ENCODE measurements at regions of chr18 and their contacts with region 1.

Region 1: GRCh38 chr18:72762515-72763122 is 105.2 kb downstream of the NETO1 start:
- DNase-seq: no peak
- ATAC-seq: peak; percentile 27

Region 2: DNA sequence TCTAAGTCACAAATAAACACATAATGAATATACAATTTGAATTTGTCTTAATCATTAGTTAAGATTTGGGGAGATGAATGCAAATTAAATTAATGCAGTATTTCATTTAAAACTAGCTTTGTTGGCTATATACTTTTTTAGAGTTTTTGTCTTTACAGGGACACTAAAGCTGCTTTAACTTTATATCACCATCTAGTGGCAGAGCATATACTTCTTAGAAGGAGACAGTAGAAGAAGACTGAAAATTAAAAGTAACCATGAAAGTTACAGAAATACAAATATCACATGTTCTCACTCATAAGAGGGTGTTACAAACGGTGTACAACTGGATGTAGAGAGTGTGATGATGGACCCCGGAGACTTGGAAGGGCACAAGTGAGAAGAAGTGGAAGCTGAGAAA is 373.5 kb after region 1 on chr18:
- intact Hi-C with region 1: loop called (anchors 10 kb)
- DNase-seq: no peak
- ATAC-seq: no peak

Measured in left ventricle myocardium superior (tissue), 1 donor.